Common myeloid progenitor, CD34-positive (primary cell): ENCODE measurements at regions of chr22 and their contacts with region 1.

Region 1: DNA sequence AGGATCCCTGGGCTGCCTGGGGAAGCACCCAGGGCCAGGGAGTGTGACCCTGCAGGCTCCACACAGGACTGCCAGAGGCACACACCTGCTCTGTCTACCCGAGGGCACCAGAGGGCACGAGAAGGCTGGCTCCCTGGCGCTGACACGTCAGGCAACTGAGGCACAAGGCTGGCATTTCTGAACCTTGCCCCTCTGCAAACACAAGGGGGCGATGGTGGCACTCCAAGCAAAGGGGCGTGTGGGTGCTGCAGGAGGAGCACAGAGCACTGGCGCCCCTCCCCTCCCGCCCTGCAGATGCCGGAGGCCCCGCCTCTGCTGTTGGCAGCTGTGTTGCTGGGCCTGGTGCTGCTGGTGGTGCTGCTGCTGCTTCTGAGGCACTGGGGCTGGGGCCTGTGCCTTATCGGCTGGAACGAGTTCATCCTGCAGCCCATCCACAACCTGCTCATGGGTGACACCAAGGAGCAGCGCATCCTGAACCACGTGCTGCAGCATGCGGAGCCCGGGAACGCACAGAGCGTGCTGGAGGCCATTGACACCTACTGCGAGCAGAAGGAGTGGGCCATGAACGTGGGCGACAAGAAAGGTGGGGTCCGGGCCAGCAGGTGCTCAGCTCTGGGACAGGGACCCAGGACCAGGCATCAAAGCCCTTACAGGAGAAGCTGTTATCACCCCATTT is 20.8 kb upstream of the TXNRD2 start:
- DNase-seq: peak; percentile 47 to 73 (median 69)
- H3K4me3 ChIP-seq: no peak overlapping the region
- H3K27ac ChIP-seq: no peak overlapping the region
- H3K4me1 ChIP-seq: peaks cover 0 to 19% (median 1%) of the 10 kb centered on the region in 4 experiments
- H3K27me3 ChIP-seq: no peaks in the 10 kb centered on the region

Region 2: GRCh38 chr22:19948057-19948760 is 14.2 kb before region 1 on chr22:
- CTCF ChIA-PET with region 1: interaction called, 39 read pairs
- POLR2A ChIA-PET with region 1: interaction called, 4 read pairs
- DNase-seq: no peak
- H3K4me3 ChIP-seq: no peak overlapping the region
- H3K27ac ChIP-seq: no peak overlapping the region
- H3K4me1 ChIP-seq: peaks cover 5 to 18% (median 15%) of the 10 kb centered on the region in 4 experiments
- H3K27me3 ChIP-seq: no peaks in the 10 kb centered on the region